ENCODE measurements at regions of chr5 and their contacts with region 1.

Region 1: GRCh38 chr5:8864053-8864452 is 681.8 kb downstream of the SEMA5A start:
- DNase-seq: peak; percentile 40
- H3K4me3 ChIP-seq: no peak overlapping the region
- H3K27ac ChIP-seq: no peak overlapping the region
- H3K4me1 ChIP-seq: peaks cover 4% of the 10 kb centered on the region
- H3K27me3 ChIP-seq: no peaks in the 10 kb centered on the region
- CTCF ChIP-seq: peak; percentile 70 to 82

Region 2: GRCh38 chr5:8949908-8950307 is 85.9 kb after region 1 on chr5:
- CTCF ChIA-PET with region 1: no interaction called
- dilution Hi-C with region 1: no loop called
- in situ Hi-C with region 1: no loop called
- intact Hi-C with region 1: loop called (anchors 10 kb)
- DNase-seq: no peak
- H3K4me3 ChIP-seq: no peak overlapping the region
- H3K27ac ChIP-seq: no peak overlapping the region
- H3K4me1 ChIP-seq: no peaks in the 10 kb centered on the region
- H3K27me3 ChIP-seq: no peaks in the 10 kb centered on the region
- CTCF ChIP-seq: no peak

Region 3: DNA sequence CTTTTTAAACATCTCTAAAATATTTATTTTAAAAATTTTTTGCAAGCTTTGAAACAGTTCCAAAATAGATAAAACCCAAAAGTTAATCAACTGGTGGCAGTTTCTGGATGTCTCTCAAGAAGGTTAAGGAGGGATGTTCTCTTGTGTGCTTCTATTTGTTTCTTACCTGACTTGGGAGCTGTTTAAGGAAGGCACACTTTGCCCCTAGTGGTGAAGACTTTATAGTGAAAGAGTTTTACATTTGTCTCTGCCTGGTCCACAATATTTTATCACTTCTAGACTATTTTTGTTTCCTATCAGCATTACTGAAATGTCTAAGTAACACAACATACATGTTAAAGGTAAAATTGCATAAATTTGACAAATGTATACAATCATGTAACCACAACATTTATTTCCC is 129.0 kb after region 1 on chr5:
- CTCF ChIA-PET with region 1: no interaction called
- dilution Hi-C with region 1: no loop called
- in situ Hi-C with region 1: no loop called
- intact Hi-C with region 1: loop called (anchors 2 kb)
- DNase-seq: peak; percentile 19
- H3K4me3 ChIP-seq: no peak overlapping the region
- H3K27ac ChIP-seq: no peak overlapping the region
- H3K4me1 ChIP-seq: peaks cover 16% of the 10 kb centered on the region
- H3K27me3 ChIP-seq: no peaks in the 10 kb centered on the region
- CTCF ChIP-seq: peak; percentile 59 to 61

Region 4: DNA sequence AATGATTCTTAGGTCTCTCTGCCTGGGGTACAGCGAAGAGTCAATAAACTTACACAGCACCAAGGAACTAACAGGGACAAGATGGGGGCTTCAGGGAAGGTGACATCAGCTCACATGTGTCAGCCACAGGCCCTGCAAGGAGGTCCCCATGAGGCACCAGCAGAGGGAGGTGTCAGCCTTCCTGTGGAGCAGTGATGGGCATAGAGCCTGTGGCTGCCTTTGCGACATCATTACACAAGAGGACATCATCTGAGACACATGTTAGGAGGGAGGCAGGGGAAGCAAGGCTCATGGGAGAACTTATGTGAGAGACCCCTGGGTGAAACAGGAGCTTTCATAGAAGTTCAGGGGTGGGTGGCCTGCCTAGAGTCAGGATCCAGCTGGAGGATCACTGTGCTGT is 292.2 kb after region 1 on chr5:
- CTCF ChIA-PET with region 1: no interaction called
- dilution Hi-C with region 1: no loop called
- in situ Hi-C with region 1: no loop called
- intact Hi-C with region 1: loop called (anchors 5 kb)
- DNase-seq: peak; percentile 46
- H3K4me3 ChIP-seq: no peak overlapping the region
- H3K27ac ChIP-seq: no peak overlapping the region
- H3K4me1 ChIP-seq: no peaks in the 10 kb centered on the region
- H3K27me3 ChIP-seq: no peaks in the 10 kb centered on the region
- CTCF ChIP-seq: peak; percentile 62 to 81